Breast epithelium (tissue), 4 donors: ENCODE measurements at regions of chr19 and their contacts with region 1.

Region 1: GRCh38 chr19:44777715-44778347 is at the start of gene CBLC:
- DNase-seq: peak; percentile 82 to 89
- H3K4me3 ChIP-seq: peak within 1 kb of the TSS in 2 of 3 donors; percentile 59 to 63
- H3K27ac ChIP-seq: peak within 1 kb of the TSS; percentile 75 to 83
- H3K4me1 ChIP-seq: no peaks in the 10 kb centered on the region
- H3K27me3 ChIP-seq: no peaks in the 10 kb centered on the region
- CTCF ChIP-seq: peak in 1 of 3 donors; percentile 25
- POLR2A ChIP-seq: peak; percentile 51
- total RNA-seq, gene CBLC: 15.7 to 18.1 TPM in 2 of 3 donors, not detected in the other

Region 2: GRCh38 chr19:44817725-44818465 is 40.1 kb after region 1 on chr19:
- intact Hi-C with region 1: loop called (anchors 1 kb)
- DNase-seq: no peak
- H3K4me3 ChIP-seq: no peak overlapping the region
- H3K27ac ChIP-seq: no peak overlapping the region
- H3K4me1 ChIP-seq: no peaks in the 10 kb centered on the region
- H3K27me3 ChIP-seq: no peaks in the 10 kb centered on the region
- CTCF ChIP-seq: no peak
- POLR2A ChIP-seq: no peak